HepG2 (cell line): ENCODE measurements at regions of chr6 and their contacts with region 1.

Region 1: DNA sequence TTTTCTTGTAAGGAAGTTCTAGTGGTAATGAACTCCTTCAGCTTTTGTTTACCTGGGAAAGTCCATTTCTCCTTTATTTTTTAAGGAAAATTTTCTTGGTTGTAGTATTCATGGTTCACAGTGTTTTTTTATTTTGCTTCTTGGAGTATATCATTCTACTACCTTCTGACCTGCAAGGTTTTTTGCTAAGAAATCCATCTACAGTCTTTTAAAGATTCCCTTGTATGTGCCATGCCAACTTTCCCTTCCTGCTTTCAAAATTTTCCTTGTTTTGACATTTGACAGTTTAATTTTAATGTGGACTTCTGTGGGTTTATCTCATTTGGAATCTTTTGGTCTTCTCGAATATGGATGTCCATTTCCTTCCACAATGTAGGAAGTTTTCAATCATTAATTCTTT is 855.6 kb downstream of the TBC1D32 start:
- DNase-seq: no peak
- ATAC-seq: no peak
- H3K4me3 ChIP-seq: no peak overlapping the region
- H3K27ac ChIP-seq: no peak overlapping the region
- H3K4me1 ChIP-seq: no peaks in the 10 kb centered on the region
- H3K27me3 ChIP-seq: no peaks in the 10 kb centered on the region
- CTCF ChIP-seq: no peak
- EP300 ChIP-seq: no peak
- POLR2A ChIP-seq: no peak
- RAD21 ChIP-seq: no peak

Region 2: DNA sequence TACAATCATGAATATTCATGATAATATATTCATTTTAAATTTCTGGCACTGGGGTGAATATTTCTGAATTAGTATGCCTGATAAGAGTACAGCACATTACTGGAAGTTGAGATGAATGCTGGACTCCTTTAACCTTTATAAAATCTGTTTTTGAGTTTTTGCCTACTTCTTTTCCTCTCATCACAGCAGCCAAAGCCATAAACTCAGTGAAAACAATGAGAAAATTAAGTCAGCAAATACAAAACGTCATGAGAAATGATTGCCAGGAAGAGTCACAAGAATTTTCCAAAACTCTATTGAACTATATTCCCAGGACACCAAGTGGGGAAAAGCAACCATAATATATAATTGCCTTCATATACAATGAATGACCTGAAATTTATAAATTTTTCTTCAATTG is 18.0 kb after region 1 on chr6:
- CTCF ChIA-PET with region 1: no interaction called
- POLR2A ChIA-PET with region 1: no interaction called
- in situ Hi-C with region 1: no loop called
- intact Hi-C with region 1: loop called (anchors 1 kb)
- DNase-seq: no peak
- ATAC-seq: no peak
- H3K4me3 ChIP-seq: no peak overlapping the region
- H3K27ac ChIP-seq: no peak overlapping the region
- H3K4me1 ChIP-seq: no peaks in the 10 kb centered on the region
- H3K27me3 ChIP-seq: no peaks in the 10 kb centered on the region
- CTCF ChIP-seq: no peak
- EP300 ChIP-seq: no peak
- POLR2A ChIP-seq: no peak
- RAD21 ChIP-seq: no peak

Region 3: GRCh38 chr6:120534954-120535353 is 56.3 kb after region 1 on chr6:
- CTCF ChIA-PET with region 1: no interaction called
- POLR2A ChIA-PET with region 1: no interaction called
- in situ Hi-C with region 1: no loop called
- intact Hi-C with region 1: no loop called
- DNase-seq: no peak
- ATAC-seq: no peak
- H3K4me3 ChIP-seq: no peak overlapping the region
- H3K27ac ChIP-seq: no peak overlapping the region
- H3K4me1 ChIP-seq: no peaks in the 10 kb centered on the region
- H3K27me3 ChIP-seq: no peaks in the 10 kb centered on the region
- CTCF ChIP-seq: no peak
- EP300 ChIP-seq: no peak
- POLR2A ChIP-seq: no peak
- RAD21 ChIP-seq: no peak